ENCODE measurements at regions of chr7 and their contacts with region 1.

Region 1: GRCh38 chr7:18693406-18693805 is 197.9 kb downstream of the HDAC9 start:
- DNase-seq: no peak
- H3K4me3 ChIP-seq: no peak overlapping the region
- H3K27ac ChIP-seq: no peak overlapping the region
- H3K4me1 ChIP-seq: no peaks in the 10 kb centered on the region
- H3K27me3 ChIP-seq: no peaks in the 10 kb centered on the region
- CTCF ChIP-seq: peak in 2 of 5 experiments; percentile 10 to 27
- EP300 ChIP-seq: no peak
- POLR2A ChIP-seq: no peak

Region 2: DNA sequence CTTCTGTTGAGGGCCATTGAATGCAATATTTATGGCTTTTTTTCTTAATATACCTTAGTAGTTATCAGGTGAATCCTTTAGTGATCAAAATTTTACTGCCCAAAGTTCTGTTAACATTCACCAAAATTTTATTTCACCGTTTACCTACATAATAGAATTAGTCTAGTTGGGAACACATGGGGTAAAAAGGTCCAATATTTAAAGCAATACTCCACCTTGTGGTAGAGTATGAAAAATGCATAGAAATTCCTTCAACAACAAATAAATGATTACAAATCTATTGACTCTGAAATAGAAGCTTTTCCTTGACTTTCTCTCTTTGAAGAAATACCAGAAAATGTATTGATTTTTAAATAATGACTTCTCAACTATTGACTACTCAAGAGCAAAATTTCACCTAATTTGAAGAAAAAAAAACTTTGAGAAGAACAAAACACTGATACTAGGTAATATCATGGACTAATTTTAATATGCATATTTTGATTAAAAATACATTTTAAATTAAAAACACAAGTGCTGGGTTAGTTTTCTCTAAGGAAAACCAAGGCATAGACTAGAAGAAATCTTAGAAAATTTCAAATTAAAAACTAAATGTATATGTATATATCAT is 972.1 kb after region 1 on chr7:
- in situ Hi-C with region 1: loop called in 1 of 4 experiments (anchors 25 kb)
- intact Hi-C with region 1: no loop called
- DNase-seq: no peak
- H3K4me3 ChIP-seq: no peak overlapping the region
- H3K27ac ChIP-seq: no peak overlapping the region
- H3K4me1 ChIP-seq: peaks cover 0 to 6% (median 0%) of the 10 kb centered on the region in 4 donors
- H3K27me3 ChIP-seq: no peaks in the 10 kb centered on the region
- CTCF ChIP-seq: peak; percentile 35 to 59 (median 49)
- EP300 ChIP-seq: no peak
- POLR2A ChIP-seq: no peak

Measured in transverse colon (tissue), 4 donors.